ENCODE measurements at regions of chr7 and their contacts with region 1.

Region 1: DNA sequence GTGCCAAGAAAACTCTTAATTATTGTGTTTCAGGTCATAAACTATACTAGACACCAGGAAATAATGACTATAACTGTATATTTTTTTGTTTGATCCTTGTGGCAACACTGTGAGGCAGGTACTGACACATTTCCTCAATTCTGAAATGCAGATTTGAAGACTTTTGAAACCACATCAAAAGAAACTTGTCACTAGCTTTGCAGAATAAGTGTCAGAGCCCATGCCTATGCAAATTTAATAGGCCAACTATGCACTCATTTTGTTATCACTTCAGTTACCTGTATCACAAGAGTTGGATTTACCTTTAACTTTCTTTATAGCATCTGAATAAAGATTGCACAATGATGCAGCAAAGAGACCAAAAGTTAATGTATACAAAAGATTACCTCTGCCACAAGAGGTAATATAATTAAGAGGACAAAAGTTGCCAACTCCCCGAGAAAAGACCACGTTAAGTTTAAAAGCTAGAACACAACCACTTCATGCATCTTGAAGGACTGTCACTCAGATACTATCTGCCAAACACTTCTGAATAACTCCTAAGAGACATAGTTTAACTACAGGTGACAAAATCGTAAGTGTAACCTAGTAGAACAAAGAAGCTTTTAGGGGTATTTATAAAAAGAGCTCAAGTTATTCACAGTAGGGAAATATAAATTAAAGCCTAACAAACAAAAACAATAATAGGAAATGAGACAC is 80.5 kb downstream of the ELAPOR2 start:
- DNase-seq: peak; percentile 13
- H3K4me3 Mint-ChIP-seq: no peak overlapping the region
- H3K27ac Mint-ChIP-seq: peak overlapping the region; percentile 19
- H3K4me1 Mint-ChIP-seq: peaks cover 33% of the 10 kb centered on the region
- H3K27me3 Mint-ChIP-seq: no peaks in the 10 kb centered on the region

Region 2: DNA sequence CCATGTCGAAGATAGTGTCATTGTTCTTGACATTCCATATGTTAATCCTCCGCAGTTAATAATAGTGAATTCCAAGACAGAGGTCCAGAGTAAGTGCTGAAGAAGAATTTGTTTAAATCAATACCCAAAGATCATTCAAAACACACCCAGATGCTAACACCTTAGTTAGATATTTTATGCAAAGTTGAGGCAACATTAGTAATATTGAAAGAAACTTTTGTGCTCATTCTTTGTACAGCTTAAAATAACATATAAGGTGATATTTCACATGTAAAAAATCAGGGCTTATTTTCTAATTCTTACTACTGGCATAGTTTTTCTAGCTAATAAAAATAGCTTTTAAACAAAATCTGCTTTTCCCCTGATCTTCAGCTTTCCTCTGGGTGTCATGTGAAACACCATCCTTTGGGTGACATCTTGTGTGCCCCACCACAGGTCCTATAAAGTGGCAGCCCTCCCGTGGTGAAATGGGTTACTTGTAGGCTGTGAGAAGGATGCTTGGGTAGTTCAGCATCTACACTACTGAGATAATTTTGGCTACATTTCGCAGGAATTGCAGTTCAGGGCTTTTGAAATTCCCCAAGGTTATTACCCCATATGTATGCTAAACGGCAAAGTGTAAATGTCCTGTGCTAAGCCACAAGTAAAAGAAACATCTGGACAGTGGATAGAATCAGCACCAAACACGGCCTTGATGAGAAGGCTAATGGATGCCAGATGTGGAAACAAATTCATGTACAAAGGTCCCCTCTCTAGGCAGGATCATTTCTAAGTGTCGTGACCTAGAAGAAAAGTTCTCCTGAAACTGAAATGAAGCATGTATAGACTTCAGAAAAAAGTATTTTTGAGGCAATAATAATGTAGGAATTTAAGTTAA is 229.9 kb before region 1 on chr7:
- CTCF ChIA-PET with region 1: no interaction called
- intact Hi-C with region 1: no loop called
- DNase-seq: no peak
- H3K4me3 Mint-ChIP-seq: no peak overlapping the region
- H3K27ac Mint-ChIP-seq: no peak overlapping the region
- H3K4me1 Mint-ChIP-seq: no peaks in the 10 kb centered on the region
- H3K27me3 Mint-ChIP-seq: peaks cover 4% of the 10 kb centered on the region

Region 3: DNA sequence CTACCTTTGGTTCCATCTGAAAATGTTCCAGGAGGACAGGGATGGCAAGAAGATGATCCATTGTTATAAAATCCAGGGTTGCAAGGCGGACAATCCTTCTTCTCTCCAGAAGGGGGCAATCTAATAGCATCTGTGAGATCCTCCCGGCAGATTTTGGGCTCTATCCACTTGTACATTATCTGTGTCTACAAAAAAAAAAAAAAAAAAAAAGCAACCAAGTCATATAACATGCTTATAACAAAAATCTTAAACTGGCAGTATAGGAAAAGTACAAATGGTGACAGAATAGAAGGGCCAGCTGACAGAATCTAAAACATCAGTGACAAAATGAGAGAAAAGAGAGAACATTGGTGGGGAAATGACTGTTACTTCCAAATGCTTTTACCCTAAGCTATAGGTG is 52.2 kb before region 1 on chr7:
- CTCF ChIA-PET with region 1: interaction called, 3 read pairs
- intact Hi-C with region 1: loop called (anchors 1 kb)
- DNase-seq: peak; percentile 43
- H3K4me3 Mint-ChIP-seq: no peak overlapping the region
- H3K27ac Mint-ChIP-seq: no peak overlapping the region
- H3K4me1 Mint-ChIP-seq: peaks cover 16% of the 10 kb centered on the region
- H3K27me3 Mint-ChIP-seq: peaks cover 2% of the 10 kb centered on the region

Region 4: DNA sequence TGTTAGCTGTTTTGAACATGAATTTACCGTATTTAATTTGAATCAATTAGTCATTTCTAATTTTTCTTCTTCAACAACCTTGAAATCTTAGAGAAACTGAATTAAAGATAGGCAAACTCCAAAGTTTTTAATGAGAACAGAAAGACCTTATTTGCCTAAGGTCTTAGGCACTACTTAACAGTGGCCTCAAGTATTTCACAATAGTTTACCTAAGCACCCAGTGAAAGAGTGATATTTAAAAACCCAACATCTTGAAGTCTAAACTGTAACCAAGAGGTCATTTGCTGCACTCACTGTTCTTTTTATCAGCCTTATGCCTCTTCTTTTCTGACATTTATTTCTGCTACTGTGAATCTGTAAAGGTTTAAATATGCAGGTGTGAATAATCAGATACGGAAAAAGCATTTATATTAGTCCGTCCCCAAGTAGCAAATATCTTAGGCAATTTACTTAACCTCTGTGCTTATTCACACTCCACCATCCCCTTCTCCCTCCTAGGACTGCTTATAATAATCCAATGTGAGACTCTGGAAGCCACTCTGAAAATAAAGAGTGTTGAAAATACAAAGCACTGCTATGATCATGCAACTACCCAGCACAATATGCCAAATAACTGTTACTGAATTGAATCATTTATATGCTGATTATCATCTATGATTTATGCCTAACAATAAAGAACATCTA is 25.2 kb before region 1 on chr7:
- CTCF ChIA-PET with region 1: no interaction called
- intact Hi-C with region 1: loop called (anchors 2 kb)
- DNase-seq: no peak
- H3K4me3 Mint-ChIP-seq: no peak overlapping the region
- H3K27ac Mint-ChIP-seq: no peak overlapping the region
- H3K4me1 Mint-ChIP-seq: peaks cover 3% of the 10 kb centered on the region
- H3K27me3 Mint-ChIP-seq: no peaks in the 10 kb centered on the region

Region 5: DNA sequence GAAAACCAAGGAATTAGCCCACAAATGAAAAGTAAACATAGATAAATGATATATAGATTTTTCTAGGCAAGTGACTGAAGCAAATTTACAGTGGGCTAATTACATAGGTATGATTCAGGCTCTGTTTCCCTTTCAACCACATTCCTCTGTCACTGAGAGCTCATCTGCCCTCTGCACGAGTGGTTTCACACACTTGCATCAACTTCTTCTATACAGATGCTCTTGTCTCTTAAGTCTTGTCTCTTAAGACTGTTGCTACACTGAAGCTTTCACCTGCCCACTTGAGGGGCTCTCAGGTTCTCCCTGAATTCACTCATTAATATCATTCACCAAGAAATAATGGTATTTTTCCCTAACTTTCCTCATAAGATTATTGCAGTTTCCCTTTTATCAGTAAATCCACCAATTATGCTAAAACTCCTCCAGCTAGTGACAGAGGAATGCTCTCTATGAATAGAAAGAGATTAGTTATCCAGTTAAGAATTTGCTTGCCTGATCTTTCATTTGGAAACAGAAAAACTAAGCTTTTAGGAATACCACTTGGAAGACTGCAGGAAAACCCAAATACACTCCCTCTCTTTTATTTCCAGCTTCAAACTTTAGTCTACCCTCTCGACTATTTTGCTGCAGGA is 15.2 kb before region 1 on chr7:
- CTCF ChIA-PET with region 1: interaction called, 3 read pairs
- intact Hi-C with region 1: loop called (anchors 1 kb)
- DNase-seq: peak; percentile 30
- H3K4me3 Mint-ChIP-seq: no peak overlapping the region
- H3K27ac Mint-ChIP-seq: no peak overlapping the region
- H3K4me1 Mint-ChIP-seq: peaks cover 2% of the 10 kb centered on the region
- H3K27me3 Mint-ChIP-seq: peaks cover 3% of the 10 kb centered on the region

Region 6: DNA sequence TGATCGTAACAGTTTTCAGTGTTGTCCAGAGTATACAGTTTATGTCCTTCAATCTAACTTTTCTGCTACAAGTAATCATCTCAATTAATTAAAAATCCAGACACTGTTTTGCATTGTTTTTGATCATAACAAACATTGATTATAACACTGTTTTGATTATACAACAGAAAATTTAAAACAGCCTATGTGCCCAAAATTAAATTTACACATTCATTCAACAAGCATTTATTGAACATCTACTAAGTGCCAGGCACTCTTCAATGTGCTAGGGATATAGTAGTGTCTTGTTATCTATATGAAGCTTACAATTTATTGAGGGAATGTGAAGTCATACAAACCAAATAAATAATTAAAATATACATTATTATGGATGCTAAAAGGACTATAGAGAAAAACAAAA is 69.9 kb after region 1 on chr7:
- CTCF ChIA-PET with region 1: no interaction called
- intact Hi-C with region 1: no loop called
- DNase-seq: no peak
- H3K4me3 Mint-ChIP-seq: no peak overlapping the region
- H3K27ac Mint-ChIP-seq: no peak overlapping the region
- H3K4me1 Mint-ChIP-seq: no peaks in the 10 kb centered on the region
- H3K27me3 Mint-ChIP-seq: no peaks in the 10 kb centered on the region

Region 7: DNA sequence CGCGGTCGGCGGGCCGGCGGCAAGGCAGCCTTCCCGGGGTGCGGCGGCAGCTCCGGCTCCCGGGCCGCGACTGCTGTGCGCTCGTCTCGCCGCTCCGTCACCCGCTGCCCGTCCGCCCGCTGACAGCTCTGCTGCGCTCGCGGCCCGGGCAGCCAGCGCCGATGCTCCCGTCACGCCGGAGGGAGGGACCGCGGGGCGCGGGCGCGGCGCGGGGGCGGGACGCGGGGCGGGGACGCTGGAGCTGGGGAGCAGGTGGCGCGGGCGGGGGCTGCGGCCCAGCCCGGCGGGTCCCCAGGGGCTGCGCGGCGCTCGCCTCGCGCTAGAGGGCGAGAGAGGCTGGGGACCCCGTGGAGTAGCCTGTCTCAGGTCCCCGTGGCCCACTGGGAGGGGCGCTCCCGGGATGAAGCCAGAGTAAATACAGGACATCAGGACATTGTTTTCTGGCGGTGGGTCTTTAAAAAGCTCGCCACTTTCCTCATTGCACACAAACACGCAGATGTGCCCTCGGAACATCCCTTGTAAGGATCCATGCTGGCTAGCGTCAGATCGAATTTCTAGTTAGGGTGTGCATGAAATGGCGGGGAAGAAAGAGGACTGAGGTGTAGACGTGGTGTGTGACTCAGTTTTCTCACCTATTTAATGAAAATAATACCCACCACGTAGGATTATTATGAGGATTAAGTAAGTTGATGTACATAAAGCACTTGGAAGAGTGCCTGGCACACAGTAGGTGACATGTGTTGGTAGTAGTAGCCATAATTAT is 80.7 kb after region 1 on chr7 and contains the start of gene ELAPOR2:
- CTCF ChIA-PET with region 1: no interaction called
- intact Hi-C with region 1: loop called (anchors 1 kb)
- DNase-seq: peak; percentile 79
- H3K4me3 Mint-ChIP-seq: peak within 1 kb of the TSS; percentile 71
- H3K27ac Mint-ChIP-seq: no peak within 1 kb of the TSS
- H3K4me1 Mint-ChIP-seq: peaks cover 12% of the 10 kb centered on the region
- H3K27me3 Mint-ChIP-seq: peaks cover 5% of the 10 kb centered on the region
- total RNA-seq, gene ELAPOR2: 3.2 to 3.9 TPM

Region 8: DNA sequence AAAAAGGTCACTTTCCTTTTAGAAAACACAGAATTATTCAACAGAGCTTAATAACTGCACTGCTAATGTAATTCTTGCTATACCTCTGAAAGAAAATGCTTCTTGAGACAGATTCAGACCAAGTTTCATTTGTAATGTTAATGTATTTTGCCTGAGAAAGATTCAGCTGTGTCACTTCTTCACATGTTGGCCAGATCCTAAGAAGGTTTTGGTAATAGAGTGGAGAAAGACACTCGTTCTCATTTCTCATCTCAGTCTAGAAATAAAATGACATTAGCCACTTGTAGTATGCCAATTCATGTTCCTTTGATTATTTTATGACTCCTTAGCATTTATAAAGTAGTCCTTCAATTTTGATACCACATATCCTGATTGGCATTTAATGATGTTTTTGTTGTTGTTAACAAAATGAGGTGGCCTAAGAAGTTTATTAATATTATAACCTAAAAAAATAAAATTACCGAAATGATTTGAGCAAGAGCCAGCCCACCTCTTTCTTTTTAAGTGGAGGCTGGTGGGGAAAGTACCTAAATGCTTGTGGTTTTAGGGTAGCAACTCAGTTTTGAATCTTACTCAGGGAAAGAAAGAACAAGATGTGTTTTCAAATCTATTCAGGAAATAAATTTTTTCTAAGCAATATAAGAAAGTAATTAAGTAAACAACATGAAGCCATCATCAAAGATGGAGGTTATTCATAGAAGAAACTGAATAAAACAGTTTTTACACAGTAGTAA is 96.9 kb after region 1 on chr7:
- CTCF ChIA-PET with region 1: no interaction called
- intact Hi-C with region 1: loop called (anchors 1 kb)
- DNase-seq: peak; percentile 5
- H3K4me3 Mint-ChIP-seq: no peak overlapping the region
- H3K27ac Mint-ChIP-seq: no peak overlapping the region
- H3K4me1 Mint-ChIP-seq: peaks cover 8% of the 10 kb centered on the region
- H3K27me3 Mint-ChIP-seq: peaks cover 5% of the 10 kb centered on the region

Region 9: DNA sequence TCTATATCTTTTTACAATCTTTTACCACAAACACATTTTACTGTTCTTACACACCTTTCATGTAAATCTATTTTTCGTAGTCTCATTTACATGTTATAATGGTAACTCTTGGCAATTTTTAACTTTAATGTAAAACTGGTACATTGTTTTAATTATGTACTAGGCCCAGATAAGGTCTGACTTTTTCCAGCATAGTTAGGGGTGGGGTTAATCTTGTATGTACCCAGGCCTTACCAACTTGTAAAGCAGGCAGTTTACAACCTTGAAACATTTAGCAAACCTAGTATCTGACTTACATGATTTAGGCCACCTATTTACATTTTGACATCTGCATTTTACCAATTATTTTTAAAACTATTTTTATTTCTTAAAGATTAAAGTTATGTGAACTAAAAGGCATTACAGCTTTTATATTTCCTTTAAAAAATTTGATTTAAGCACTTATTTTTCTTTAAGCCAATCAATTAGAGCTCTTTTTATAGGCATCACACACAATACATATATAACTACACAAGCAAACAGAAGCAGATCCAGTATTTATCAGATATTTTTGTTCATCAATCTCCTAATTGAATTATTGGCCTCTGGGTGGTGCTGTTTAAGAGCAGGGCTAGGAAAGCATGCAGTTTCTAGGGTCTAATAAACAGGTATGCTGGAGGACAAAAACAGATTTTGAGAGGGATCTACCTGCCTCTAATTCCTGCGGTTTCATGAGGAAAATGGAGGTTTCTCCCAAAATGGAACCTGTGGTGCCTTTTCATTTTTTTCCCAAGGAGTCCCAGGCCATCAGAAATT is 346.8 kb after region 1 on chr7:
- CTCF ChIA-PET with region 1: no interaction called
- intact Hi-C with region 1: no loop called
- DNase-seq: no peak
- H3K4me3 Mint-ChIP-seq: no peak overlapping the region
- H3K27ac Mint-ChIP-seq: no peak overlapping the region
- H3K4me1 Mint-ChIP-seq: peaks cover 2% of the 10 kb centered on the region
- H3K27me3 Mint-ChIP-seq: no peaks in the 10 kb centered on the region

Region 10: GRCh38 chr7:87600130-87601124 is 621.5 kb after region 1 on chr7 and contains the start of gene ABCB1:
- CTCF ChIA-PET with region 1: no interaction called
- intact Hi-C with region 1: loop called (anchors 10 kb)
- DNase-seq: peak; percentile 73
- H3K4me3 Mint-ChIP-seq: peak within 1 kb of the TSS; percentile 84
- H3K27ac Mint-ChIP-seq: peak within 1 kb of the TSS; percentile 8
- H3K4me1 Mint-ChIP-seq: peaks cover 20% of the 10 kb centered on the region
- H3K27me3 Mint-ChIP-seq: peaks cover 5% of the 10 kb centered on the region
- total RNA-seq, gene ABCB1: 2.3 to 3.5 TPM

Measured in activated naive CD4-positive, alpha-beta T cell treated with anti-CD3 and anti-CD28 coated beads for 36 hours (primary cell).